Activated CD4-positive, alpha-beta memory T cell treated with anti-CD3 and anti-CD28 coated beads, Interleukin-2, amount 10 ng/mL, durations not matched to agents 7 days and 5 days (primary cell): ENCODE measurements at regions of chr22 and their contacts with region 1.

Region 1: DNA sequence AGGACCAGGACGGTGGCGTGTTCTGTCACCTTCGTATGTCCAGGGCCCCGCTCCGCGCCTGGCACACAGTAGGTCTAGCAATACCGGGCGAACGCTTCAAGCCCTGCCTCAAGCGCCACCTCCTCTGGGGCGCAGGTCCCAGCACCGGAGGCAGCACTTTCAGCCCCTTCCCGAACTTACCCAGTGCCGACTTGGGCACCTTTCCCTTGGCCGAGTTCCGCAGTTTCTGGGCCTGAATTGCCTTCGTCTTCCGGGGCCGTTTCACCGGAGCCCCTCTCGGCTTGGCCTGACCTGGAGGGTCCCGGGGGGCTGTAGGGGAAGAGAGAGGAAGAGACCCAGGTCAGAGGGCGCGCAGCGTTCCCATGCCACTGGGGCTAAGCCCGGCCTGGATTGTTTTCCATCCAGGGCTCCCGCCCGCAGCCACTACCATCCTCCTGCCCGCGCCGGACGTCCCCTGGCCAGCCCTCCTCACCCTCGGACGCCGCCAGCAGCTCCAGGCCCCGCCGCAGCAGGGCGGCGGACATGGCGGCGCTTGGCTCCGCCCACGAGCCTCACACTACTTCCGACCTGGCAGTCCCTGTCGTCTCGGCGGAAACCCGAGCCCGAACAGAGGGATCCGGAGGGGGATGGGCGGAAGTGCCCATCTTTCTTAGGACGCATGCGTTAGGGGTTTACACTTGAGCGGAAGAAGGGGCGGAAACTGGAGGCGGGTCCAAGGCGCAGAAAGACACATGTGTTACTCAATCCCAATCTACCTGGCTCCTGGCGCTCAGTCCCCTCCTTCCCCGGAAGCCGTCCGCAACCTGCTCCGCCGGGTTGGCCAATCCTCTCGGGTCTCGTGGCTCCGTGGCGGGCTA is at the start of gene RPS19BP1:
- DNase-seq: peak; percentile 100
- H3K4me3 Mint-ChIP-seq: peak within 1 kb of the TSS; percentile 94
- H3K27ac Mint-ChIP-seq: peak within 1 kb of the TSS; percentile 86
- H3K4me1 Mint-ChIP-seq: peaks cover 59% of the 10 kb centered on the region
- H3K27me3 Mint-ChIP-seq: no peaks in the 10 kb centered on the region
- total RNA-seq, gene RPS19BP1: 54.3 to 60.7 TPM

Region 2: DNA sequence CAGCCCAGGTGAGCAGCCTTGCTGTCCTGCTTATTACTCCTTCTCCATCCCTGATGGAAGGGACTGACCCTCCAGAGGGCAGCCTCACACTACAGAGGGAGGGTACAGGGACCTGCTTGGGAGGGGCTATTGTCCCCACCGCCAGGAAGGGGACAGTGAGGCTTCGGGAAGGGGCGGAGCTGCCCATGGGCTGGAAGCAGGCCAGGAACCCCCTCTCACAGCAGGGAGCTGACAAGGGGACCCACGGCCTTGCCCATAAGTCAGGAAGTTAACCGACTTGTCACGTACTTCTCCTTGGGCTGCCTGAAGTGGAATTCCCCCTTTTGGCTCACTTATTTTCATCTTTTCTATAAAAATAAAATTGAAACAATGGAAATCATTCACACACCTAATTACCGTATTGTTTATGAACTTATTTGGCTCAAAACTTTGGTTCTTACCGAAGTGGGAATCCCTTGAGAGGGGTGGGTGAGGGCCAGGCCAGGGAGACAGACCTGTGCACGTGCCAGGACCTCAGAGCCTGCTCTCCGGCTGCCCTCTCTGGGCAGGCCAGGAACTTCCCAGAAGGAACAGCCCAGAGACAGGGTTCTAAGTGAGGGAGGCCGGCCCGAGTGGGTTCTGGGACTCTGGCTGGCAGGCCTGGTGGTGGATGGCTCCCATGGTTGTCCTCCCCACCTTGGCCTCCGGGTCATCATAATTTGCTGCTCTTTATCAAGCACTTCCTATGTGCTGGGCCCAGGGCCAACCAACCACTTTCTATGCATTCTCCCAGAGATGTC is 69.8 kb before region 1 on chr22:
- CTCF ChIA-PET with region 1: no interaction called
- POLR2A ChIA-PET with region 1: no interaction called
- DNase-seq: no peak
- H3K4me3 Mint-ChIP-seq: no peak overlapping the region
- H3K27ac Mint-ChIP-seq: no peak overlapping the region
- H3K4me1 Mint-ChIP-seq: peaks cover 5% of the 10 kb centered on the region
- H3K27me3 Mint-ChIP-seq: peaks cover 28% of the 10 kb centered on the region

Region 3: GRCh38 chr22:39496131-39496838 is 36.2 kb before region 1 on chr22:
- CTCF ChIA-PET with region 1: interaction called, 210 read pairs
- POLR2A ChIA-PET with region 1: interaction called, 124 read pairs
- DNase-seq: peak; percentile 63
- H3K4me3 Mint-ChIP-seq: no peak overlapping the region
- H3K27ac Mint-ChIP-seq: no peak overlapping the region
- H3K4me1 Mint-ChIP-seq: peaks cover 8% of the 10 kb centered on the region
- H3K27me3 Mint-ChIP-seq: peaks cover 12% of the 10 kb centered on the region

Region 4: DNA sequence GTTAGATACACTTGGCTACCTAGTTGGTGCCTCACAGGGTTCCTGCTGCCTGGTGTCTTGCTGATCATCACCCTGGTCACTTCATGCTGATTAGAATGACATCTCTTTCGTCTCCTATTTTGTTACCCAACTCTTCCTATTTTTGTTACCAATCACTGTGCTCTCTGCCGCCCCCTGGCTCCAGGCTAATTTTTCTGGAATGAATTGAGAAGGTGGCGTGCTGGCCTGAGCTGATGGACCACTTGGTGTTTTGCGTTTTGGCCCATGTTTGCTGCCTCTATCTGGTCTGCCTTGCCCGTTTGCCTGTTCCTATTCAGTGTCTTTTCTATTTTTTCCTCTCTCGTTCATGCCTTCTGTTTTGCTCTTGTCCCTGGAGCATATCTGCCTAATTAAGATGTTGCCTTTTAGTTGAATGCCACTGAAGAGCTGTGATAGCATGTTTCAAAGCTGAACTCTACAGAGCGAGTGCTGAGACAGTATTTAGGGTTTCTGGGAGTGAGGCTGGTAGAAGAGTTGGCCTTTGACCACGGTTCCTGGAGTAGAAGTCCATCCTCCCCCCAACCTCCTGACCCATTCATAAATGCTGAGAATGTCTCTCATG is 18.0 kb before region 1 on chr22:
- CTCF ChIA-PET with region 1: interaction called, 65 read pairs
- POLR2A ChIA-PET with region 1: interaction called, 121 read pairs
- DNase-seq: peak; percentile 63
- H3K4me3 Mint-ChIP-seq: no peak overlapping the region
- H3K27ac Mint-ChIP-seq: peak overlapping the region; percentile 11
- H3K4me1 Mint-ChIP-seq: peaks cover 36% of the 10 kb centered on the region
- H3K27me3 Mint-ChIP-seq: no peaks in the 10 kb centered on the region

Region 5: GRCh38 chr22:39543095-39543494 is 10.7 kb after region 1 on chr22:
- CTCF ChIA-PET with region 1: interaction called, 17 read pairs
- POLR2A ChIA-PET with region 1: interaction called, 5 read pairs
- DNase-seq: no peak
- H3K4me3 Mint-ChIP-seq: no peak overlapping the region
- H3K27ac Mint-ChIP-seq: no peak overlapping the region
- H3K4me1 Mint-ChIP-seq: peaks cover 26% of the 10 kb centered on the region
- H3K27me3 Mint-ChIP-seq: peaks cover 36% of the 10 kb centered on the region

Region 6: DNA sequence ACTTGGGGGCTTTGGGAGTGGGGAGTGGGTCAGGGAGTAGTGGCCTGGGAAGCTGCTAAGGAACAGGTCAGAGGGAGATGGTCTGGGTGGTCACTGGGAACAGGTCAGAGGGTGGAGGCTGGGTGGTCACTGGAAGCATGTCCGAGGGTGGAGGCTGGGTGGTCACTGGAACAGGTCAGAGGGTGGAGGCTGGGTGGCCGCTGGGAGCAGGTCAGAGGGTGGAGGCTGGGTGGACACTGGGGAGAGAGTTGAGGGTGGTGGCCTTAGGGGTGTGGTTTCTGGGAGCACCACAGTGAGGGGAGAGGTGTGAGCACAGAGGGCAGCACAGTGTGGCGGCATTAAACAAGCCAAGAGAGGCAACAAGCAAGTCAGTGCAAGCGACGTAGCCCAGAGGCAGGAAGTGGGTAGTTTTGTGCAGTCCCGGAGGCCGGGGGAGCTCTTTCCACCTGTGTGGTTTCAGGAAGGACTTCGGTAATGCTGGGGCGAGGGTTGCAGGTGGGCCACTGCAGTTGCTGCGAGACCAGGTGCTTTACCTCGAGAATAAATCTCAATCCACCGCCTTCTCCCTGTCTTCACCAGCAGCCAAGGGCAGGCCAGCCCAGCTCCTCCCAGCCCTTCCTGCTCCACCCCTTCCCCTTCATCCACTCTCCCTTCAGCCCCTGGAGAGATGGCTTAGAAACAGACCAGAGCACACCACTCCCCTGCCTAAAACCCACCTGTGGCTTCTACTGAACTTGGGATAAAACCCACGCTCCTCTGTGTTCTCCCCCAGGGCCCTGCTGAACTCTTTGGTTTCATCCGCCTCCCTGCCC is 34.9 kb after region 1 on chr22:
- CTCF ChIA-PET with region 1: no interaction called
- POLR2A ChIA-PET with region 1: no interaction called
- DNase-seq: peak; percentile 64
- H3K4me3 Mint-ChIP-seq: no peak overlapping the region
- H3K27ac Mint-ChIP-seq: peak overlapping the region; percentile 48
- H3K4me1 Mint-ChIP-seq: peaks cover 20% of the 10 kb centered on the region
- H3K27me3 Mint-ChIP-seq: peaks cover 4% of the 10 kb centered on the region

Region 7: GRCh38 chr22:39820256-39820655 is 287.8 kb after region 1 on chr22:
- CTCF ChIA-PET with region 1: no interaction called
- POLR2A ChIA-PET with region 1: no interaction called
- DNase-seq: no peak
- H3K4me3 Mint-ChIP-seq: no peak overlapping the region
- H3K27ac Mint-ChIP-seq: no peak overlapping the region
- H3K4me1 Mint-ChIP-seq: peaks cover 3% of the 10 kb centered on the region
- H3K27me3 Mint-ChIP-seq: peaks cover 5% of the 10 kb centered on the region

Region 8: GRCh38 chr22:40036591-40037225 is 504.3 kb after region 1 on chr22:
- CTCF ChIA-PET with region 1: interaction called, 59 read pairs
- POLR2A ChIA-PET with region 1: interaction called, 4 read pairs
- DNase-seq: peak; percentile 63
- H3K4me3 Mint-ChIP-seq: no peak overlapping the region
- H3K27ac Mint-ChIP-seq: no peak overlapping the region
- H3K4me1 Mint-ChIP-seq: no peaks in the 10 kb centered on the region
- H3K27me3 Mint-ChIP-seq: peaks cover 19% of the 10 kb centered on the region